ENCODE measurements at regions of chr22 and their contacts with region 1.

Region 1: GRCh38 chr22:17205432-17205831 is 13.8 kb downstream of the ADA2 start:
- DNase-seq: no peak
- H3K4me3 Mint-ChIP-seq: no peak overlapping the region
- H3K27ac Mint-ChIP-seq: peak overlapping the region; percentile 19
- H3K4me1 Mint-ChIP-seq: no peaks in the 10 kb centered on the region
- H3K27me3 Mint-ChIP-seq: no peaks in the 10 kb centered on the region

Region 2: GRCh38 chr22:17237038-17237668 is 31.7 kb after region 1 on chr22:
- CTCF ChIA-PET with region 1: no interaction called
- DNase-seq: peak; percentile 67
- H3K4me3 Mint-ChIP-seq: peak overlapping the region; percentile 66
- H3K27ac Mint-ChIP-seq: peak overlapping the region; percentile 91
- H3K4me1 Mint-ChIP-seq: peaks cover 24% of the 10 kb centered on the region
- H3K27me3 Mint-ChIP-seq: peaks cover 8% of the 10 kb centered on the region

Region 3: DNA sequence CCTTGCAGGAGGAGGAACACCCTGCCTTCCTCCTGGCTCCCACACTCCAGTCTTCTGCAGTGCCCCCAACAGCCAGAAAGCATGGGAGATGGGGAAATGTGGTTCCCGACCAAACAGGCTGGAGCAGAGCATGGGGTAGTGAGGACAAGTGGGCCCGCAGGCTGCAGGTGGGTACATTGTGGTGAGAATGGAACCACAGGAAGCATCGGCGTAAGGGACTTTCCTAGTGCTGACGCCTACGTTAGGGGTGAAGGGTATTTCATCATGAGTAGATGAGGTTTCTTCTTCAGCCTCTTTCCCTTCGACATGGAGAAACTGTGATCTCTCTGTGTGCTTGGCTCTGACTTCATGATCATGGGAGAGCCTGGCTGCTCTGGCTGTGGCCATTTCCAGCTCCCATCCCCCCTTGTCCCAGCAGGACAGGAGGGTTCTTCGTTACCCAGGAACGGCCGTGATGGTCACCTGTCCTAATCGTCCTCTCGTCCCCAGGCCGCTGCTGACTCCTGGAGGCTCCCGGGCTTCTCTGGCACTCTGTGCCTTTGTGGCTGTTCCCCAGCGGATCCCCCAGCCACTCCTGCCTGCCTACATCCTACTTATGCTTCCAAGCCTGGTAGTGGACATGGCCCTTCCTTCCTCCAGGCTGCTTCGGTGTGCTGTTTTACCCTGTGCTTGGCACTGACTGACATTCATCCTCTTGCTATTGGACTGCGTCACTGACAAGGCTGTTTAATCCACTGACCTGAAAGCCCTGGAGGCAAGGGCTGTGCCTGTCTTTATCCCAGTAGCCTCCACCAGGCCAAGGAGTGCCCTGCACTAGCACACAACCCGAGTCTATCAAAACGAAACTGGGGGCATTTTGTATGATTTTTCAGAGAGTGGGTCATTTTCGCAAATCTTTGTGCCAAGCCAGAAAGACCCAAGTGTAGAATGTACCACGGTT is 98.7 kb after region 1 on chr22:
- CTCF ChIA-PET with region 1: no interaction called
- DNase-seq: peak; percentile 64
- H3K4me3 Mint-ChIP-seq: no peak overlapping the region
- H3K27ac Mint-ChIP-seq: peak overlapping the region; percentile 76
- H3K4me1 Mint-ChIP-seq: peaks cover 18% of the 10 kb centered on the region
- H3K27me3 Mint-ChIP-seq: peaks cover 4% of the 10 kb centered on the region

Region 4: GRCh38 chr22:17501679-17502285 is 296.4 kb after region 1 on chr22:
- CTCF ChIA-PET with region 1: interaction called, 19 read pairs
- DNase-seq: peak; percentile 33
- H3K4me3 Mint-ChIP-seq: no peak overlapping the region
- H3K27ac Mint-ChIP-seq: no peak overlapping the region
- H3K4me1 Mint-ChIP-seq: no peaks in the 10 kb centered on the region
- H3K27me3 Mint-ChIP-seq: peaks cover 9% of the 10 kb centered on the region